CD8-positive, alpha-beta T cell (primary cell): ENCODE measurements at regions of chr11 and their contacts with region 1.

Region 1: GRCh38 chr11:83087035-83087434 is 15.3 kb upstream of the RAB30 start:
- DNase-seq: peak in 1 of 9 experiments; percentile 16
- ATAC-seq: no peak
- H3K4me3 ChIP-seq: no peak overlapping the region
- H3K4me3 Mint-ChIP-seq: no peak overlapping the region
- H3K27ac ChIP-seq: no peak overlapping the region
- H3K27ac Mint-ChIP-seq: peak overlapping the region; percentile 19
- H3K4me1 ChIP-seq: no peaks in the 10 kb centered on the region
- H3K4me1 Mint-ChIP-seq: peaks cover 21% of the 10 kb centered on the region
- H3K27me3 ChIP-seq: no peaks in the 10 kb centered on the region
- H3K27me3 Mint-ChIP-seq: no peaks in the 10 kb centered on the region
- CTCF ChIP-seq: no peak

Region 2: DNA sequence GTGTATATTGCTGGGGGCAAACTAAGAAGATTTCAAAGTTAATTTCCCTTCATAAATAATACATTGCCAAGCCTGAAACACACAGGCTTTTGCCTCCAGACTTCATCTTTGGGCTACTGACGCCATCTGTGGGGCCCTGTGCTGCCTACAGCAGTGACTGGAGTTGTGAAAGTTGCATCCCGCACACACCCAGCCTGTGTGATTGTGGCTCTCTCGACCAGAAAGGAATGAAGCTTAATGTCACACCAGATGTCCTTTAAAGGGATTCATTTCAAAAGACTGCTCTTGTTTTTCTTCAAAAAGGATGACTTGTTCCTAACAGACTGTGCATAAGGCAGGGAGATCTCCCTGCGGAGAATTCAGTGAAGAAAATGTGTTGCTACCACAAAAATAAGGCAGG is 563.9 kb before region 1 on chr11:
- CTCF ChIA-PET with region 1: no interaction called
- POLR2A ChIA-PET with region 1: no interaction called
- intact Hi-C with region 1: no loop called
- DNase-seq: no peak
- ATAC-seq: no peak
- H3K4me3 ChIP-seq: no peak overlapping the region
- H3K4me3 Mint-ChIP-seq: no peak overlapping the region
- H3K27ac ChIP-seq: no peak overlapping the region
- H3K27ac Mint-ChIP-seq: no peak overlapping the region
- H3K4me1 ChIP-seq: no peaks in the 10 kb centered on the region
- H3K4me1 Mint-ChIP-seq: no peaks in the 10 kb centered on the region
- H3K27me3 ChIP-seq: peaks cover 0 to 2% of the 10 kb centered on the region in 2 experiments
- H3K27me3 Mint-ChIP-seq: peaks cover 10% of the 10 kb centered on the region
- CTCF ChIP-seq: no peak

Region 3: GRCh38 chr11:82883853-82884252 is 203.2 kb before region 1 on chr11:
- CTCF ChIA-PET with region 1: no interaction called
- POLR2A ChIA-PET with region 1: no interaction called
- intact Hi-C with region 1: no loop called
- DNase-seq: no peak
- ATAC-seq: no peak
- H3K4me3 ChIP-seq: no peak overlapping the region
- H3K4me3 Mint-ChIP-seq: no peak overlapping the region
- H3K27ac ChIP-seq: no peak overlapping the region
- H3K27ac Mint-ChIP-seq: no peak overlapping the region
- H3K4me1 ChIP-seq: no peaks in the 10 kb centered on the region
- H3K4me1 Mint-ChIP-seq: peaks cover 6% of the 10 kb centered on the region
- H3K27me3 ChIP-seq: no peaks in the 10 kb centered on the region
- H3K27me3 Mint-ChIP-seq: no peaks in the 10 kb centered on the region
- CTCF ChIP-seq: no peak

Region 4: DNA sequence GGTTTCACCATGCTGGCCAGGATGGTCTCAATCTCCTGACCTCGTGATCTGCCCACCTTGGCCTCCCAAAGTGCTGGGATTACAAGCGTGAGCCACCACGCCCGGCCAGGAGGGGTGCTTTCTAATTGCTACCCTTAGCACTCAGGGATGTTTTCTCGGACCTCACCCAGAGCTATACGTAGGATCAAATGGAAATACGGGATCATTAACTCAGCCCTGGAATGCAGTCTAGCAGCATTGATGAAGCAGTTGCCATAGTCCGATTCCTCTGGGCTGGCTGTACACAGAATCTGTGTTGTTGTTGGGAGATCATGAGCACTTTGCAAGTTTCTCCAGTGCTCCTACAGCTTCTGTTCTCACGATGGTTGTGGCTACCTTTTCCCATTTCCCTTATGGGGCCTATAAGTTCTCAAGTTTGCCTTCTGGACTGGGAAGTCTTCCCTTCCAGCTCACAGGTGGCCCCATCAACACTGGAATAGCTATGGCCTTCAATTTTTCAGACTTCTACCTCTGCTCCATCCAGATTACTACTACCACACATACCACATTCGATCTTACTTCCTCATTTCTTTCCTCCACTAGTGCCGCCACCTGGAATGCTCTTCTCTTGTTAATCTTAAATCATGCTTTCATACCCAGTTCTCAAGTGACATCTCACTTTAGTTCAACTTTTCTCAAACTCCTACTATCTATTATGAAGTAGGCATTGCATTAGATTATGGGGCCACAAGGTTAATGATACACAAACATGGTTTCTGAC is 53.8 kb after region 1 on chr11:
- CTCF ChIA-PET with region 1: no interaction called
- POLR2A ChIA-PET with region 1: no interaction called
- intact Hi-C with region 1: loop called in 1 of 2 experiments (anchors 5 kb)
- DNase-seq: no peak
- ATAC-seq: no peak
- H3K4me3 ChIP-seq: no peak overlapping the region
- H3K4me3 Mint-ChIP-seq: no peak overlapping the region
- H3K27ac ChIP-seq: no peak overlapping the region
- H3K27ac Mint-ChIP-seq: no peak overlapping the region
- H3K4me1 ChIP-seq: no peaks in the 10 kb centered on the region
- H3K4me1 Mint-ChIP-seq: no peaks in the 10 kb centered on the region
- H3K27me3 ChIP-seq: no peaks in the 10 kb centered on the region
- H3K27me3 Mint-ChIP-seq: no peaks in the 10 kb centered on the region
- CTCF ChIP-seq: no peak